ENCODE measurements at regions of chr13 and their contacts with region 1.

Region 1: DNA sequence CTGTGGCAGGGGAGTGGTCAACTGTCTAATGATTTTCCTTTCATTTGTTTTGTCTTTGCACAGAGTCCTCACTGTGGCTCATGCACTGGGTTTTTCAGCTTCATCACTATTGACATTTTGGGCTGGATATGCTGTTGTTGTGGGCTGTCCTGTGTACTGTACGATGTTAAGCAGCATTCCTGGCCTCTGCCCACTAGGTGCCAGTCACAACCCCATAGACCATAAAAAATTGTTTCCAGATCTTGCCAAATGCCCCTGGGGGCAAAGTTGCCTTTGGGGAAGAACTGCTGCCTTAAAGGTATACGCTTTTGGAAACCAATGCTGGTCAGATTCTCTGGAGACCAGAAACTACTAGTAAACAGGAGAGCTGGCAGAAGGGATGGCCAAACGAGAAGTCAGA is 310.4 kb downstream of the SPRY2 start:
- DNase-seq: peak; percentile 65
- H3K4me3 ChIP-seq: no peak overlapping the region
- H3K27ac ChIP-seq: no peak overlapping the region
- H3K4me1 ChIP-seq: peaks cover 7% of the 10 kb centered on the region
- H3K27me3 ChIP-seq: no peaks in the 10 kb centered on the region
- CTCF ChIP-seq: peak; percentile 47 to 50

Region 2: DNA sequence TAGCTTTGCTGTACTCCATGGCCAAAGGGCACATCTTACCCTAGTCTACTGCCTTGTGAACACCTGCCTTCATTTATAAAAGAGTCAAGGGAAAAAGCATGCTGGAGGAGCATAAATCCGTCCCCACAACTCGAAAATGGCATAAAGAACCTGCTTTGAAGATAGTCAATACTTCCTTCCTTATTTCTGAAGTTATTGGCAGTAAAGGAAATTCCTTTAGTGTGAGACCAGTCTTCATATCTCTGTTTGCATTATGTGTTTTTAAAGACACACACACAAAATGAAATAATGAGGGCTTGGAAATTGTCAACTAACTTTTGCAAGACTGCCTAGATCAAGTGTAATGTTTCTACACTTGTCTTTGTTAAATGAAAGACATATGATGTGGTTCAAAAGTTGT is 97.9 kb before region 1 on chr13:
- CTCF ChIA-PET with region 1: no interaction called
- dilution Hi-C with region 1: no loop called
- in situ Hi-C with region 1: no loop called
- intact Hi-C with region 1: no loop called
- DNase-seq: no peak
- H3K4me3 ChIP-seq: no peak overlapping the region
- H3K27ac ChIP-seq: no peak overlapping the region
- H3K4me1 ChIP-seq: peaks cover 32% of the 10 kb centered on the region
- H3K27me3 ChIP-seq: no peaks in the 10 kb centered on the region
- CTCF ChIP-seq: no peak

Region 3: GRCh38 chr13:80363890-80364503 is 333.5 kb after region 1 on chr13:
- CTCF ChIA-PET with region 1: no interaction called
- dilution Hi-C with region 1: no loop called
- in situ Hi-C with region 1: no loop called
- intact Hi-C with region 1: loop called (anchors 1 kb)
- DNase-seq: peak; percentile 5
- H3K4me3 ChIP-seq: peak overlapping the region in 1 of 3 experiments; percentile 41
- H3K27ac ChIP-seq: peak overlapping the region; percentile 27
- H3K4me1 ChIP-seq: peaks cover 10% of the 10 kb centered on the region
- H3K27me3 ChIP-seq: no peaks in the 10 kb centered on the region
- CTCF ChIP-seq: peak; percentile 69 to 81